ENCODE measurements at regions of chr1 and their contacts with region 1.

Region 1: DNA sequence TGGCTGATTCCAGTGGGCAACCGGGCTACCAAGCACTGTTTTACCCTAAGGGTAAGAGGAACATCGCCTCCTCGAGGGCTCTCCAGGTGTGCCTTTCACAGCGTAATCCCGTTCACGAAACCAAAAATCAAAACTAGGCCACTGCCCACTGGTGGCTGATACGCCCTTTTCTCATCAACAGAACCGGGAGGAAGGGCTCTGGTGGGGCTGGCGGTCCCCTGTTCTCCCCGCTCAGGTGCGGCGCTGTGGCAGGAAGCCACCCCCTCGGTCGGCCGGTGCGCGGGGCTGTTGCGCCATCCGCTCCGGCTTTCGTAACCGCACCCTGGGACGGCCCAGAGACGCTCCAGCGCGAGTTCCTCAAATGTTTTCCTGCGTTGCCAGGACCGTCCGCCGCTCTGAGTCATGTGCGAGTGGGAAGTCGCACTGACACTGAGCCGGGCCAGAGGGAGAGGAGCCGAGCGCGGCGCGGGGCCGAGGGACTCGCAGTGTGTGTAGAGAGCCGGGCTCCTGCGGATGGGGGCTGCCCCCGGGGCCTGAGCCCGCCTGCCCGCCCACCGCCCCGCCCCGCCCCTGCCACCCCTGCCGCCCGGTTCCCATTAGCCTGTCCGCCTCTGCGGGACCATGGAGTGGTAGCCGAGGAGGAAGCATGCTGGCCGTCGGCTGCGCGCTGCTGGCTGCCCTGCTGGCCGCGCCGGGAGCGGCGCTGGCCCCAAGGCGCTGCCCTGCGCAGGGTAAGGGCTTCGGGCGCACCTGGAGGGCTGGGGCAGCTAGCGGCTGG is at the start of gene IL6R:
- DNase-seq: peak; percentile 98
- ATAC-seq: peak; percentile 93
- total RNA-seq, gene IL6R: 13.1 TPM

Region 2: GRCh38 chr1:154324669-154325582 is 80.2 kb before region 1 on chr1 and contains the start of gene ATP8B2:
- intact Hi-C with region 1: loop called (anchors 5 kb)
- DNase-seq: peak; percentile 88
- ATAC-seq: peak; percentile 56
- total RNA-seq, gene ATP8B2: 12.8 TPM

Region 3: DNA sequence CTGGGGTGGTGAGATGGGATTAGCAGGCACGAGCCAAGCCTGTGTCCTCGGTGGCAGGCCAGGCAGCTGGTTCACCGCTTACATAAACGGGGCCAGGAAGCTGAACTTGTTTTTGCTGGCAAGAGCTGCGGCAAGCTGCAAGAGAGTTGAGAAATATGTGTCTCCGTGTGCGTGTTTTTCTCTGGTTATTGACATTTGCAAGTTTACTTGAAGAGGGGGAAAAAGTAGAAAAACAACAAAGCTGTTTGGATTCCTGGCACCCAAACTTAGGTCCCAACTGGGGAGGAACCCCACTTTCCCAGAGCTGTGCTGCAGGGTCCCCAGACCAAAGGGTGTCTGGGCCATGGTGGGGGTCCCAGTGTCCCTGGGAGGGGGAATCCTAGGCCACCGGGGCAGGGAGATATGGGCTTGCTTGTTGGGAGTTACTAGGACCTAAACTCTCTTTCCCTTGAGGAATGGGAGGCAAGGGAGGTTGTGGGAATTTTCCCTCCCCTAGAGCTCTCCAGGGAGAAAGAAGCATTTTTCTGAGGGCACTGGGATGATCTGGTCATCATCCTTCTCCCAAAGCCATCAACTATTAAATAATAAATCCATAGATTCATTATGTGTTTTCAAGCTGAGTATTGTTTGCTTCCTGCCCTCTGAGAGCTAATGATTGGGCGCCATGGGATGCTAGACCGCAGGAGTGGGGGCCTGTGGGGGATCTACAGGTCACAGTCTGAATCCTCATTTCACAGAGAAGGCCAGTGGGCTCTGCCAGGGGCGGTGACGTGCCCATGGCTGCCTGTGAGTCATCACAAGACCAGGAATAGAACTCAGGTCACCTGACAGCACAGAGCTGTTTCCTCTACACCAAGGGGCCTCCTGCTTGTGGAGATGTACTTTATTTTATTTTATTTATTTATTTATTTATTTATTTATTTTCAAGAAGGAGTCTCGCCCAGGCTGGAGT is 14.7 kb after region 1 on chr1:
- intact Hi-C with region 1: loop called (anchors 2 kb)
- DNase-seq: peak; percentile 92
- ATAC-seq: peak; percentile 86

Region 4: DNA sequence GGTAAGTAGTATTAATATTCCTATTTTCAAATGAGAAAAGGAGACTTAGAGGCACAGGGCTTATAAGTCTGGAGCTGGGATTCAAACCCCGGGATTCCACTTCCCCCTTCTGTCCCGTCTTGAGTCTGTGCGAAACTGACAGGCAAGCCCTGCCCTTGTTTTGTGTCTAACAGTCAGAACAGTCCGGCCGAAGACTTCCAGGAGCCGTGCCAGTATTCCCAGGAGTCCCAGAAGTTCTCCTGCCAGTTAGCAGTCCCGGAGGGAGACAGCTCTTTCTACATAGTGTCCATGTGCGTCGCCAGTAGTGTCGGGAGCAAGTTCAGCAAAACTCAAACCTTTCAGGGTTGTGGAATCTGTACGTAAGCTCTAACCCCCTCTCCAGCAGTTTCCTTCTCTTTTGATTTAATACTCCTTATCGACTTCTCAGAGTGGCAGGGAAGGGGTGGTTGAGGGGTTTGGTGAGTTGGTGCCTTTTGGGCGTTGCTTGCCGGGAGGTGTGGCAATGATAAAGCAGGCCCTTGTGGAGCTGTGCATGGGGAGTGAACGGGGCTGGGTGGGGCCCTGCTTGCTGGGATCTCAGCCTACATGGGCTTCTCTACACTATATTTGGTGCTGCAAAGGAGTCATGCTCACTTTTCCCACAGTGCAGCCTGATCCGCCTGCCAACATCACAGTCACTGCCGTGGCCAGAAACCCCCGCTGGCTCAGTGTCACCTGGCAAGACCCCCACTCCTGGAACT is 29.3 kb after region 1 on chr1:
- intact Hi-C with region 1: loop called (anchors 1 kb)
- DNase-seq: peak; percentile 84
- ATAC-seq: peak; percentile 90

Region 5: DNA sequence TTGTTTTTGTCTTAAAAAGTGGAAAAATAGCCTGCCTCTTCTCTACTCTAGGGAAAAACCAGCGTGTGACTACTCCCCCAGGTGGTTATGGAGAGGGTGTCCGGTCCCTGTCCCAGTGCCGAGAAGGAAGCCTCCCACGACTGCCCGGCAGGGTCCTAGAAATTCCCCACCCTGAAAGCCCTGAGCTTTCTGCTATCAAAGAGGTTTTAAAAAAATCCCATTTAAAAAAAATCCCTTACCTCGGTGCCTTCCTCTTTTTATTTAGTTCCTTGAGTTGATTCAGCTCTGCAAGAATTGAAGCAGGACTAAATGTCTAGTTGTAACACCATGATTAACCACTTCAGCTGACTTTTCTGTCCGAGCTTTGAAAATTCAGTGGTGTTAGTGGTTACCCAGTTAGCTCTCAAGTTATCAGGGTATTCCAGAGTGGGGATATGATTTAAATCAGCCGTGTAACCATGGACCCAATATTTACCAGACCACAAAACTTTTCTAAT is 61.8 kb after region 1 on chr1:
- intact Hi-C with region 1: loop called (anchors 5 kb)
- DNase-seq: no peak
- ATAC-seq: no peak

Region 6: GRCh38 chr1:154657556-154657955 is 252.4 kb after region 1 on chr1:
- intact Hi-C with region 1: no loop called
- DNase-seq: no peak
- ATAC-seq: no peak

Measured in Right ventricle myocardium inferior (tissue), 1 donor.